Natural killer cell (primary cell): ENCODE measurements at regions of chr5 and their contacts with region 1.

Region 1: DNA sequence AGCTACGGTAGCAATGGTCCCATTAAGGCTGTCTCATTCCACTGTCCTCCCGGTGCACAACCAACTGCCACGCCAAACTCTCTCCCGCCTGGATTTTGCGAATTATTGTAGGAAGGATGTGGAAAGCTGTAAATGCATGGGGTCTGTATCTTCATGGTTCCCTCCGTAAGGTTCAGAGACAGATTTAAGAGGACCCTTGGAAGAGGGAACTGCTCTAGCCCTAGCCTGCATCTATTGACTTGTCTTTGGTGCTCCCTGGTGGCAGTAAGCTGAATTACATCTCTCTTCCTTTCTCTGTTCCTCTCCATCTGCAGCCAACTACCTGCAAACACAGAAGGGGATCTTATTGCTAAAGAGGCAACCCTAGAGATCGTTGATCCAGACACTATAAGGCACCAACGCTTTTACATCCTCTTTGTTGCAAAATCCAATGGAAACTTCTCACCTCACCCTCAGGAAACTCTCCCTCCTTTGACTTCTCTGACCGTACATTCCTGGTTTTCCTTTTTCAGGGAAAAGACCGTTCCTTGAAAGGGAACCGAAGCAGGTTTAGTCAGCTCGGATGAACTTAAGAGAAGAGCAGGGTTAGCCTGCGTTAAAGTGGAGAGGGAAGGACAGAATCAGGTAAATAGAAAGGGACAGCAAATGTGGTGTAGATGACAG is 11.9 kb downstream of the CAPSL start:
- DNase-seq: peak; percentile 22 to 86
- ATAC-seq: peak; percentile 67 to 84 (median 75)
- H3K4me3 ChIP-seq: no peak overlapping the region
- H3K4me3 Mint-ChIP-seq: no peak overlapping the region
- H3K27ac ChIP-seq: no peak overlapping the region
- H3K27ac Mint-ChIP-seq: no peak overlapping the region
- H3K4me1 ChIP-seq: peaks cover 18% of the 10 kb centered on the region
- H3K4me1 Mint-ChIP-seq: peaks cover 11 to 18% of the 10 kb centered on the region in 2 donors
- H3K27me3 ChIP-seq: no peaks in the 10 kb centered on the region
- H3K27me3 Mint-ChIP-seq: peaks cover 25 to 53% of the 10 kb centered on the region in 2 donors
- CTCF ChIP-seq: peak; percentile 93

Region 2: DNA sequence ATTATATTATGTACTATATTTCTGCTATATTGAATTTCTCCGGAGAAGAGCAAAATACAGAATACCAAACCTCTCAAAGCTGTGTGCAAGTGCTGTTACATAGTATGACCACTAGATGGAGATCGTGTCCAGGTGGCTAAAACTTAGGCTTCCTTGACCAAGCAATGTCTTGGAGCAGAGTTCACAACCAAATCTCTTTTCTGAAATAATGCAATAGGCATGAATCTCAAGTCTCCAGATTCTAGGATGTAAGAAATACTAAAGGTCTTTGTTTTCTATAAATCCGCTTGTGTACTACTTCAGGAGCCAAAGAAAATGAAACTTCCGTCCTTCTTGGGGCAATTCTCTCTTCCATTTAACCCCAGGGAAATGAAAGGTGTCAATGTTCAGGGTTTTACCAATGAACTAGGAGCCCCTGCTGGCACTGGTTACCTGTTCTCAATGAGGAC is 1451.9 kb before region 1 on chr5:
- intact Hi-C with region 1: loop called (anchors 10 kb)
- DNase-seq: peak in 1 of 2 donors; percentile 62
- ATAC-seq: peak; percentile 72 to 83 (median 75)
- H3K4me3 ChIP-seq: no peak overlapping the region
- H3K4me3 Mint-ChIP-seq: no peak overlapping the region
- H3K27ac ChIP-seq: no peak overlapping the region
- H3K27ac Mint-ChIP-seq: no peak overlapping the region
- H3K4me1 ChIP-seq: peaks cover 6% of the 10 kb centered on the region
- H3K4me1 Mint-ChIP-seq: peaks cover 16% of the 10 kb centered on the region in 2 donors
- H3K27me3 ChIP-seq: no peaks in the 10 kb centered on the region
- H3K27me3 Mint-ChIP-seq: peaks cover 5 to 11% of the 10 kb centered on the region in 2 donors
- CTCF ChIP-seq: peak; percentile 97

Region 3: GRCh38 chr5:34957857-34958690 is 968.4 kb before region 1 on chr5:
- intact Hi-C with region 1: loop called (anchors 10 kb)
- DNase-seq: peak in 1 of 2 donors; percentile 34
- ATAC-seq: peak in 1 of 3 donors; percentile 59
- H3K4me3 ChIP-seq: no peak overlapping the region
- H3K4me3 Mint-ChIP-seq: no peak overlapping the region
- H3K27ac ChIP-seq: no peak overlapping the region
- H3K27ac Mint-ChIP-seq: peak overlapping the region in 1 of 2 donors; percentile 10
- H3K4me1 ChIP-seq: no peaks in the 10 kb centered on the region
- H3K4me1 Mint-ChIP-seq: no peaks in the 10 kb centered on the region
- H3K27me3 ChIP-seq: no peaks in the 10 kb centered on the region
- H3K27me3 Mint-ChIP-seq: no peaks in the 10 kb centered on the region
- CTCF ChIP-seq: peak; percentile 17

Region 4: GRCh38 chr5:35089334-35090314 is 836.9 kb before region 1 on chr5:
- intact Hi-C with region 1: loop called (anchors 2 kb)
- DNase-seq: peak in 1 of 2 donors; percentile 73
- ATAC-seq: no peak
- H3K4me3 ChIP-seq: no peak overlapping the region
- H3K4me3 Mint-ChIP-seq: no peak overlapping the region
- H3K27ac ChIP-seq: no peak overlapping the region
- H3K27ac Mint-ChIP-seq: no peak overlapping the region
- H3K4me1 ChIP-seq: no peaks in the 10 kb centered on the region
- H3K4me1 Mint-ChIP-seq: no peaks in the 10 kb centered on the region
- H3K27me3 ChIP-seq: no peaks in the 10 kb centered on the region
- H3K27me3 Mint-ChIP-seq: peaks cover 0 to 3% of the 10 kb centered on the region in 2 donors
- CTCF ChIP-seq: peak; percentile 30

Region 5: DNA sequence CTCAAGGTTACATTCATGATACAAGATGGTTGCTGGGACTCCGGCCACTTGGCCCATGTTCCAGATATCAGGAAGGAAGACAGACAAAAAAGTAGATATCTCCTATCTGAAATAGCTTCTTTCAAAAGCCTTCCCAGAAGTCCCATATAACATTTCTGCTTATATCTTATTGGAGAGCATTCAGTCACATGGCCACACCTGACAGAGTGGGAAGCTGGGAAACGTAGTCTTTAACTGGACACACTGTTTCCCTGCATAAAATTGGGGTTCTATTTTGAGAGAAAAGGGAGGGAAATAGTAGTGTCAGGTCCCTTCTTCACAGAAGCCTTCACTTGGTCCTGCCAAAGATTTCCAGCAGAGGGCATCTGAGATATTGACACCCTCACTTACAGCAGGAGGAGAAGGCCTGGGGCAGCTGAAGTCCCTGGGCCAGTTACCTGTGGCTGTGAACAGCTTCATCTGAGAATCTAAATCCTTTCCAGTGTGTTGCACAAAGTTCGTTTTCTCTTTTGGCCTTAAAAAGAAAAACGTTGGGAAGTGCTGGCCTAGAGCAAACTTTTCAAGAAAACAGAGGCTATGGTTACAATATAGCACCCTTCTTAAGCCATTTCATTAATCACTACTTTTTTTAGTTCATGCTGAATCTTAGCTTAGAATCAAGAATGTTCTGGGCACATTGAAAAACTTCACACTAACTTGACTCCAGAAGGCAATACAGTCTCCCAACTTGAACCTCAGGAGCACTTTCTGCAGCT is 275.3 kb before region 1 on chr5:
- intact Hi-C with region 1: loop called (anchors 1 kb)
- DNase-seq: peak in 1 of 2 donors; percentile 82
- ATAC-seq: peak in 2 of 3 donors; percentile 48 to 84
- H3K4me3 ChIP-seq: no peak overlapping the region
- H3K4me3 Mint-ChIP-seq: no peak overlapping the region
- H3K27ac ChIP-seq: no peak overlapping the region
- H3K27ac Mint-ChIP-seq: no peak overlapping the region
- H3K4me1 ChIP-seq: no peaks in the 10 kb centered on the region
- H3K4me1 Mint-ChIP-seq: no peaks in the 10 kb centered on the region
- H3K27me3 ChIP-seq: no peaks in the 10 kb centered on the region
- H3K27me3 Mint-ChIP-seq: no peaks in the 10 kb centered on the region
- CTCF ChIP-seq: peak; percentile 44

Region 6: GRCh38 chr5:35777358-35778087 is 149.0 kb before region 1 on chr5:
- intact Hi-C with region 1: loop called (anchors 1 kb)
- DNase-seq: peak; percentile 38 to 91
- ATAC-seq: peak; percentile 49 to 73 (median 50)
- H3K4me3 ChIP-seq: no peak overlapping the region
- H3K4me3 Mint-ChIP-seq: no peak overlapping the region
- H3K27ac ChIP-seq: no peak overlapping the region
- H3K27ac Mint-ChIP-seq: no peak overlapping the region
- H3K4me1 ChIP-seq: peaks cover 3% of the 10 kb centered on the region
- H3K4me1 Mint-ChIP-seq: peaks cover 0 to 5% of the 10 kb centered on the region in 2 donors
- H3K27me3 ChIP-seq: no peaks in the 10 kb centered on the region
- H3K27me3 Mint-ChIP-seq: no peaks in the 10 kb centered on the region
- CTCF ChIP-seq: peak; percentile 74

Region 7: DNA sequence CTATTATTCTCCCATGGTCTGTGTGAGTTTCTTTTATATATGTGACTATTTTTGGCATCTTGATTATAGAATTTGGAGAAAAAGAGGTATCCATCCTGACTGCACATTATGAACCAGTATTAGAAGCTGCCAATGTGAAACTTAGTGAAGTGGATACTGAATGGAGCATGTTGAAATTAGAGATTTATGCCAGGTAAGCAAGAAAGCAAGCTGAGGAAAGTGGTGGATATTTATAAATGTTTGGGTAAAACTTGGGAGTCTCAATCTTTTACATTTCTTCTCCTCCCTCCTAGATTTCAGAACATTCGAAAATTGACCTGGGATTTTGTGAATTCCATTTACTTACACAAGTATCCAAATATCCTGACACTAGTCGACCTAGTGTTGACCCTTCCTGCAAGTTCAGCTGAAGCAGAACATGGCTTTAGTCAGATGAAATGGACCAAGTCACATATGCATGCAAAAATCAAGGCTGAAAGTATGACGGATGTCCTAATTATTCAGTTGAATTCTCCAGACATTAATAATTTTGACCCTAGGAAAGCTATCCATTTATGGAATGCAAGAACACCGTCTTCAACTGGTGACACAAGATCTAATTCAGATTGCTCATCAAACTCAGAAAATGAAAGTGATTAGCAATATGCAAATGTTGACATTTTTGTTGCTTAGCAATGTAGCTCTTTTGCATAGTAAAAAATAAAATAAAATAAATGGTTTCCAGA is 136.6 kb before region 1 on chr5:
- intact Hi-C with region 1: no loop called
- DNase-seq: peak in 1 of 2 donors; percentile 42
- ATAC-seq: no peak
- H3K4me3 ChIP-seq: no peak overlapping the region
- H3K4me3 Mint-ChIP-seq: no peak overlapping the region
- H3K27ac ChIP-seq: no peak overlapping the region
- H3K27ac Mint-ChIP-seq: no peak overlapping the region
- H3K4me1 ChIP-seq: no peaks in the 10 kb centered on the region
- H3K4me1 Mint-ChIP-seq: peaks cover 5% of the 10 kb centered on the region in 2 donors
- H3K27me3 ChIP-seq: no peaks in the 10 kb centered on the region
- H3K27me3 Mint-ChIP-seq: peaks cover 0 to 6% of the 10 kb centered on the region in 2 donors
- CTCF ChIP-seq: no peak